ENCODE measurements at regions of chr5 and their contacts with region 1.

Region 1: DNA sequence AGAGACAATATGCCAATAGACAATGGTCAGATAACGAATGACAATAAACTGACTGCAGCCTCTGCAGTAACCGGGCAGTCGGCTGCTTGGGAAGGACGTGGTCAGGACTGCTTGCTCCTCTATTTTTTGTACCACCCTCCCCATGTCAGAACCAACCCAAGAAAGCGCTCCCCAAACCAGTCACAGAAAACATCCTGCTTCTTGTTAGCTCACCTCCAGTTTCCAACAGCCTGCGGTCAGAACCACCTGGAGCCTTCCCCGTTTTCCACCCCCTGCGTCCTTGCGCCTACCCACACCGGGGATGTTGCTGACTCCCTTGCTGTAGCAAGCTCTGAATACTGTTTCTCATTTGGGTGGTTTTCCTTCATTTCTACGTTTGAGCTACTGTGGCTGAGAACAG is 1.7 kb upstream of the MRNIP start:
- DNase-seq: peak; percentile 22

Region 2: DNA sequence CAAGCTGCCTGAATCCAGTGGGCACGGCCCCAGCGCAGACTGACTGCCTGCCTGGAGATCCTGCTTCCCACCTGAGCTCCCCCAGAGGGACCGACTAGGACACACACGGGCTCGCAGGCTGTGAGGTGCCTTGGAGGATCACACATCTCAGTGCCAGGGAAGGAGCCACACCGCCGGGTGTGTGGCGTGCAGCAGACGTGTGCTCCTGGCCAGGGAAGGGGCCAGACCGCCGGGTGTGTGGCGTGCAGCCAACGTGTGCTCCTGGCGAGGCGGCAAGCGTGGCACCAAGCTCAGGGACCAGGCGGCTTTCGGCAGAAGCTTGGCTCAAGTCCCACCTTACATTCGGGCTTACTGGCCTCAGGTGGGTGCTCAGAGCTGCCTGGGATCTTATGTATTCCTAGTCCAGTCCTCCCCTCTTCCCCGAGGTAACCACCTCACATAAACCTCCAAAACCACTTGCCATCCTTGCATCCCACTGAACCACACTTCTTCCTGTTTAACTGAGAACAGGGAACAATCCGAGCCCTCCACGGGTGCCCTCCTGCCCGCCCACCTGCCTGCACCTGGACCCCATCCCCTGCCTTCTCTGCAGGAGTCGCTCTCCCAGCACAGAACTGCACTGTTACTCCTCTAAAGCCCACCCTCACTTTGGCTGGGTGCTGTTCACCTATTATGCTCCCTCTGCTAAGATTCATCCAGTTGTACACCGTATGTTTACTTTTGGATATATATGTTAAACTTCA is 20.7 kb after region 1 on chr5:
- intact Hi-C with region 1: loop called in 1 of 2 experiments (anchors 1 kb)
- DNase-seq: peak; percentile 53

Region 3: DNA sequence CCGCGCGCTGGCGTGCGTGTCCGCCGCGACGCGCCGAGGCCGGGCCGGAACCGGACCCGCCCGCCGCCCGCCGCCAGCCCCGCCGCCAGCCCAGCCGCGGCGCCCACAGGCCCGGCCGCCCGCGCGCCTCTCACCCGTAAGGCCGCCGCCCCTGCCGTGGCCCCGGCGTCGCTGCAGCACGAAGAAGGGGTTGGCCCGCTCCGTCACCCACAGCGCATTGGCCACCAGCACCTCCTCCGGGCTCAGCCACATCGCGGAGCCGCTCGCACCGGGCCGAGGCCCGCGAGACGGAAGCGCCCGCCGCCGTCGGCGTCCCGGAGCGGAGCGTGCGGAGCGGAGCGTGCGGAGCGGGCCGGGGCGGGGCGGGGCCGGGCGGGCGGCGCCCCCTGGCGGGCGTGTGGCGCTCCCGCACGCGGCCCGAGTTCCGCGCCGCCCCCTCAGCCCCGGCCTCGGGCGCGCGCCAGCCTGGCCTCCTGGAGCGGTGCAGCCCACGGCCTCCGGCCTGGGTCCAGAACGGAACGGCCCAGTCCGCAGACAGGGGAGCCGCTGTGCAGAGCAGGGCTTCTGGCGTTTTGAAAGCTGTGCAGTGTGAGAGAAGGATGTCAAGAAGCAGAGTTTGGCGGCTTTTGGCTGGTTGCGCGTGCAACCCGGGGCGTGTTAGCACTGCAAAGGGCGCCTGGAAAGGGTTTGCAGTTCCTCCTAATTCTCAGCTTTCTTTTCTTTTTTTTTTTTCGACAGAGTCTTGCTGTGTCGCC is 47.4 kb after region 1 on chr5 and contains the start of gene TBC1D9B:
- intact Hi-C with region 1: no loop called
- DNase-seq: peak; percentile 90
- total RNA-seq, gene TBC1D9B: 85.0 to 90.5 TPM

Region 4: GRCh38 chr5:180411948-180412347 is 551.6 kb after region 1 on chr5:
- intact Hi-C with region 1: no loop called
- DNase-seq: no peak